Psoas muscle (tissue), 8 donors: ENCODE measurements at regions of chr7 and their contacts with region 1.

Region 1: GRCh38 chr7:38178004-38178694 is at the start of gene STARD3NL:
- DNase-seq: peak; percentile 93 to 96
- ATAC-seq: peak; percentile 98 to 99 (median 98)
- H3K4me3 ChIP-seq: peak within 1 kb of the TSS; percentile 90
- H3K27ac ChIP-seq: peak within 1 kb of the TSS; percentile 89
- H3K4me1 ChIP-seq: peaks cover 31% of the 10 kb centered on the region
- H3K27me3 ChIP-seq: no peaks in the 10 kb centered on the region
- CTCF ChIP-seq: no peak
- total RNA-seq, gene STARD3NL: 11.1 to 16.3 (median 14.4) TPM

Region 2: GRCh38 chr7:38160003-38160571 is 18.1 kb before region 1 on chr7:
- intact Hi-C with region 1: no loop called
- DNase-seq: no peak
- ATAC-seq: no peak
- H3K4me3 ChIP-seq: no peak overlapping the region
- H3K27ac ChIP-seq: no peak overlapping the region
- H3K4me1 ChIP-seq: no peaks in the 10 kb centered on the region
- H3K27me3 ChIP-seq: no peaks in the 10 kb centered on the region
- CTCF ChIP-seq: no peak

Region 3: DNA sequence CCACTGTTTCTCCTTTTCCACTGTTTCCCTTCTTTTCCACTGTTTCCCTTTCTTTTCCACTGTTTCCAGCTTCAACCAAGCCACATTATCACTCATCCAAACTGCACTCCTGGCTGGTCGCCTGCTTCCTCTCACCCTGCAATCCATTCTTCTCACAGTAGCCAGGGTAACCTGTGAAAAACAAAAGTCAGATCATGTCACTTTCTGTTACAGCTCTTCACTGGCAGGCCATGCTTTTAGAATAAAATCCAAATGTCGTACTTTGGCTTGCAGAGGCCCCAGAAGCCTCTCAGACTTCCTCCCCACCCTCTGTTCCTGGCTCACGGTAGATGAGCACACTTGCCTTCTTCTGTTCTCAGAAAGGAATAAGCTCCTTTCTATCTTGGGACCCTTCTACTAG is 33.8 kb after region 1 on chr7:
- intact Hi-C with region 1: loop called in 1 of 2 experiments (anchors 5 kb)
- DNase-seq: peak in 1 of 2 donors; percentile 25
- ATAC-seq: no peak
- H3K4me3 ChIP-seq: no peak overlapping the region
- H3K27ac ChIP-seq: no peak overlapping the region
- H3K4me1 ChIP-seq: peaks cover 10% of the 10 kb centered on the region
- H3K27me3 ChIP-seq: no peaks in the 10 kb centered on the region
- CTCF ChIP-seq: no peak

Region 4: GRCh38 chr7:38731195-38731594 is 553.0 kb after region 1 on chr7:
- intact Hi-C with region 1: no loop called
- DNase-seq: no peak
- ATAC-seq: no peak
- H3K4me3 ChIP-seq: no peak overlapping the region
- H3K27ac ChIP-seq: no peak overlapping the region
- H3K4me1 ChIP-seq: no peaks in the 10 kb centered on the region
- H3K27me3 ChIP-seq: no peaks in the 10 kb centered on the region
- CTCF ChIP-seq: no peak